Right ventricle myocardium inferior (tissue), 1 donor: ENCODE measurements at regions of chr2 and their contacts with region 1.

Region 1: DNA sequence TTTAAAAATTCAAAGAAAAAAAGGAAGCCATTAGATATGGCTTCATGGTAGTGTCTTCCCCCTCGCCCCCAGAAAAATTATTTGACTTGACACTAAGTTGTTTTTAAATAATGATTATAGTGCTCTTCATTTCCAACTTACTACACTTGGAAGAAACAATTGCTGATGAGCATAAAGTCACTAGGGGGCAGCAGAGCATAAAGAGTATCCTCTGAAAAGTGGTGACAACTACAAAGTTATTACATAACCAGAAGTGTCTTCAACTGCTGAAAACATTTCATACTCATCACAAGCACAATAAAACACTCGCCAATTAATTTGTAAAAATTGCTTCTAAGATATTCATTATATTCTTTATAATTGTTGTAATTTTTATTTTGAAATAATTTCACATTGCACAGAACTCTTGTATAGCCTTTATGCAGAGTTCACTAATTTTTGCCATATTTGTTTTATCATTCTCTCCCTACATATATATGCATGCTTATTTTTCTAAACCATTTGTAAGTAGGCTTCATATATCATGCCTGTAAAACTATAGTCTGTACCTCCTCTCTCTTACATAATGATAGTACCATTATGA is 54.9 kb downstream of the EXOC6B start:
- DNase-seq: no peak
- ATAC-seq: peak; percentile 57

Region 2: GRCh38 chr2:72694715-72695496 is 76.1 kb before region 1 on chr2:
- intact Hi-C with region 1: no loop called
- DNase-seq: peak; percentile 65
- ATAC-seq: peak; percentile 88

Region 3: DNA sequence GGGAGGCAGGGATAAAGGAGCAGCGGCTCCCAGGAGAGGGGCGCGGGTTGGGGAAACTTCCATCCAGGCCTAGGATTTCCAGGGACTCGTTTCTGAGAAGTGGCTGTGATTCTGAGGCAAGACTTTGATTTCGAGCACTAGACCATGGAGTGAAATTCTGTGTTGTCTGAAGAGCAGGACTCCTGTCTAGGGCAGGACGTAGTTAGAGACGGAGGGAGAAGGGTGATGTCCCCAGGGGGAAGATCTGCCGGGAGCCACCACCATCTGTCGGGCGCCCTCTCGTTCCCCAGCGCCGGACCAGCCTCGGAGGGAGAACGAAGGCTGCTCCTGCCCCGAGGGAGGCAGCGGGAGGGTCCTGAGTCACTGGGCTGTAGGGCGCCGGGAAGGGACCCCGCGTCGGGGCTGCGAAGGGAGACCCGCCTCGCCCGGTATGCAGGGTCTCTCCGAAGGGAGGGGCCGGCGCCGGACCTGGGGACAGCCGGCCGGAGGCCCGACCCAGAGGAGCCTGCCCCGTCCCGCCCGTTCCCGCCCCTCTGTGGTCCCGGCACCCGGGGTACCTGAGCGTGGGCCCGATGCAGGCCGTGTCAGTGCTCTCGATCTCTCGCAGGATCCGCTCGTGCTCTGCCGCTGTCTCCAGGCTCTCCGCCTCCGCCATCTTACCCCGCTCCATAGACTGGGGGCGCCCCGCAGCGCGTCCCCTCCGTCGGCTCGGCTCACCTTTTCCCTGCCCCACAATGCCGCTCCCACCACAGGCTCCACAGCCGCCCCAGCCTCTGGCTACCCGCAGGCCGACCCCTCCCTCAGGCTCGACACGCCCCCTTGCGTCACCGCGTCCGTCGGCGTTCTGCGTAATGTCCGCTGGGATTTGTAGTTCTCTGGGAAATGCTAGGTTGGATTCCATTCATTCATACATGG is 54.5 kb after region 1 on chr2 and contains the start of gene EXOC6B:
- intact Hi-C with region 1: loop called (anchors 2 kb)
- DNase-seq: peak; percentile 95
- ATAC-seq: peak; percentile 97
- total RNA-seq, gene EXOC6B: 117 TPM

Region 4: DNA sequence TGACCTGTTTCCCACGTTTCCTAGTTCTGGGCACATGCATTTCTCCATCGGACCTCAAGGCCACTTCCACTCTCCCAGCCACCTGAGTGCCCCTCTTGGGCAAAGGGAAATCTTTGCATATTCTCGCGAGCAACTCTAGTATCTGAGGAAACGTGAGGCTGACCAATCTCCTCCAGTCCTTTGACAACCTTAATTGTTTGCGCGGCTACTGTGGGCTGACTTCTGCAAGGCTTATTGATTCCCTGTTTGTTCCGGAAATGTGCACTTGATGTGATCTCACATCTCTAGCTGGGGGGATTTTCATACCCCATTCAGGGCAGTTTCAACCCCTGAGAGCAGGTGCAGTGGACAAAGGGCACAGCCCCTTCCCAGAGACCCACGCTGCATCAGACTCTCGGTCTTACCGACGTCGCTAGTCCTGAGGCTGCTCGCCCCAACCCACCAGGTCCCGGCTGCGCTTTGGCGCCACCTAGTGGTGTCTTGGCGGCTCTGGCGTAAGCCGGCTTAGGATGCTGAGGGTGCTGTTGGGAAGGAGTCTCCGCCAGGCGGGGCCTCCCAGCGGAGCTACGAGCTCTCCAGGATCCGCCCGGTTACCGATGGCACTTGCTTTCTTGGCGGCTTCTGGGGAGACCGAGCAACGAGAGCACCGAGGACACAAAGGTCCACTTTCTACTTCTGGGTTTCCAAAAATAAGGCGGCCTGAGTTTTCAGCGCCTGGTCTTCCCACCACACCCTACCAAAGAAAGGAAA is 91.4 kb after region 1 on chr2:
- intact Hi-C with region 1: loop called (anchors 1 kb)
- DNase-seq: peak; percentile 93
- ATAC-seq: peak; percentile 98

Region 5: DNA sequence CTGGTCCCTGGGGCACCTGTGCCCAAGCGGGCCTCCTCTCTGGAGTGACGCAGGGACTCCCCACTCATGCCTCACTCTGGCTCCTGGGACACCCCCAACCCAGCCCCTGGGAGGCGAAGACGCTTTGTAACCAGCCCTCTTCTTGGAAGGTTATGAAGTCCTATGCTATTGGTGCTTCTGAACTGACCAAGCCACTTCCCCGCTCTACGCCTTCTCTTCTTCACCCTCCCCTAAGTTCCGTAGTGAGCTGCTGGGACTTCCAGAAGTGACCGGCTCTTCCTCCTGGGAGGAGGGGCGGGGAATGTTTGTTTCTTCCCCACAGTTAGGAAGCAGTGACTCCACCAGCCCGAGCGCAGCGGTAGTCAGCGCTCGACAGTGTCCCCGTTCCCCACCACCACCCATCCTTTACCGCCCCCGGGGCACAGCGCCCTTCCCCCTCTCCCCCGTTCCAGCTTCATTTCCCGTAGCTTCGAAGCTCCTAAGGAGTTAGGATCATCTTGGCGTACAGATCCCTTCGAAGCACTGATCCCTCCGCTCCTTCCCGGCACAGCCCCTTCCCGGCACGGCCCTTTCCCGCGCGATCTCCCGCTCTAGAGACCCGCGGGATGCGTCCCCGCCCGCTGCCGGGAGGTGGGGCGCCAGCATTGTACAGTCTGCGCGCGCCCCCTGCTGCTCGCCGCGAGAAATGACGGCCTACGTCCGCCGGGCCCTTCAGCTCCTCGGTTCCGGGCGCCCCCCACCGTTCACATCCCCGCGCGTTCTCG is 406.1 kb after region 1 on chr2:
- intact Hi-C with region 1: loop called (anchors 5 kb)
- DNase-seq: peak; percentile 97
- ATAC-seq: peak; percentile 96